Activated T-helper 2 cell treated with anti-CD3 and anti-CD28 coated beads, Interferon-gamma antibody, Interleukin-2, Interleukin-4, amounts not matched to agents 10 μg/mL and 5 μg/mL and 100 μg/mL, durations not matched to agents 14 hours and 24 hours and 36 hours (primary cell): ENCODE measurements at regions of chr19 and their contacts with region 1.

Region 1: DNA sequence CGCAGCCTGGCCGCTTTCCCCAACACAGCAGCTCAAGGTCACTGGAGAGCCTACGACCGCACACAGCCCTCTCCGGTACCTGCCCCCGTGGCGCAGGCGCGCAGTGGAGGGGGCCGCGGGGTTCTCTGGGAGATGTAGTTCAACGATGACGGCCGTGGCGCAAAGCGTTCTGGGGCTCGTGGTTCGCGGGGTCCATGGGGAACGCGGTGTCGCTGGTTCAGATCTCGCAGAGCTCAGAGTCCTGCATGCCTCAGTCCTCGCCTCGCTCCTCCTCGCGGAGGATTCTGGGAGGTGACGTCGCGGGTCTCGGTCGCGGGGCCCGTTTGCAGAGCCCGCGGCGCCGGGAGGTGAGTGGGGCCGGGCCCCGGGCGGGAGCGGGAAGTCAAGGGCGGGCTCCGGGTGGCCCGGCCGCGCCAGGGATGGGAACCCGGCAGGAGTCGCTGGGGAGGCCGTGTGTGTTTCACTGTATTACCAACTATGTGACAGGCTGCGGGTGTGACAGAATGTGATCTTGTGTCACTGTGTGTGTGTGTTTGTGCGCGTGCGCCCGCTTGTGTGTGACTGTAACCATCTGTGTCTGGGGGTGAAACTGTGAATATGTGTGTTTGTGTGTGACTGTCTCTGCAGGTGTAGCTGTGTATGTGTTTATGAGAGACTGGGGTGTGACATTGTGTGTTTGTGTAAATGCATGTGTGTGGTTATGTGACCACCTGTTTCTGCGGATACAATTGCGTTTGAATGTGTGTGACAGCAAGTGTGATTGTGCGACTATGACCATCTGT is at the start of gene ZNF527:
- DNase-seq: peak; percentile 96
- H3K4me3 Mint-ChIP-seq: peak within 1 kb of the TSS; percentile 90
- H3K27ac Mint-ChIP-seq: peak within 1 kb of the TSS; percentile 79
- H3K4me1 Mint-ChIP-seq: peaks cover 11% of the 10 kb centered on the region
- H3K27me3 Mint-ChIP-seq: no peaks in the 10 kb centered on the region
- total RNA-seq, gene ZNF527: 3.2 TPM in 2 replicates

Region 2: GRCh38 chr19:37172368-37173366 is 198.4 kb before region 1 on chr19 and contains the start of gene ZNF585A:
- intact Hi-C with region 1: loop called (anchors 1 kb)
- DNase-seq: peak; percentile 82
- H3K4me3 Mint-ChIP-seq: no peak within 1 kb of the TSS
- H3K27ac Mint-ChIP-seq: no peak within 1 kb of the TSS
- H3K4me1 Mint-ChIP-seq: no peaks in the 10 kb centered on the region
- H3K27me3 Mint-ChIP-seq: no peaks in the 10 kb centered on the region
- total RNA-seq, gene ZNF585A: 4.1 and 4.2 TPM in 2 replicates

Region 3: DNA sequence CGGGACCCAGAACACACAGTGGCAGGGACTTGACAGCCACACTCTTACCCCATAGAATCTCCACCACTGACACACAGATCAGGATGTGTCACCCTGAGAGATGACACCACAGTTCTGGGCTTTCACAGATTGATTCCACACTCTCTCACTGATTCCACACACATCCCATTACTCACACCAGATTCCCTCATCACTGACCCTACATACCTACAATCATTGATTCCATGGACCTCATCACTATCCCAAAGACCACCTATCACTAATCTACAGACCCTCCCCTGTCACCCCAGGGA is 57.8 kb before region 1 on chr19:
- intact Hi-C with region 1: loop called (anchors 1 kb)
- DNase-seq: no peak
- H3K4me3 Mint-ChIP-seq: peak overlapping the region; percentile 27
- H3K27ac Mint-ChIP-seq: no peak overlapping the region
- H3K4me1 Mint-ChIP-seq: peaks cover 13% of the 10 kb centered on the region
- H3K27me3 Mint-ChIP-seq: no peaks in the 10 kb centered on the region

Region 4: DNA sequence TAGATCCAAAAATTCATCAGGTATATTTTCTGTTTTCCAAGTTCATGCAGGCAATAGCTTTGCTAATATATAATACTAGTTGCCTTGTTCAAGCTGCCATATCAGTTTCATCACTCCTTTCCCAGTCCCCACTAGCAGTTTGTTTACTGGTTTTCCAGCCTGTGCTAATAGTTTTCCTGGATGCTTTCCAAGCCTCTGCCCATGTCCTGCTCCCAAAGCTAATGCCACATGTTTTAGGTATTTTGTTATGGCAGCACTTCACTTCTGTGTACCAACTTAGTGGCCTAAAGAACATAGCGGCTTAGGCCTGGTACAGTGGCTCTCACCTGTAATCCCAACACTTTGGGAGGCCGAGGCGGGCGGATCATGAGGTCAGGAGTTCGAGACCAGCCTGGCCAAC is 28.3 kb before region 1 on chr19:
- intact Hi-C with region 1: no loop called
- DNase-seq: no peak
- H3K4me3 Mint-ChIP-seq: no peak overlapping the region
- H3K27ac Mint-ChIP-seq: no peak overlapping the region
- H3K4me1 Mint-ChIP-seq: no peaks in the 10 kb centered on the region
- H3K27me3 Mint-ChIP-seq: no peaks in the 10 kb centered on the region

Region 5: GRCh38 chr19:37719111-37719926 is 348.2 kb after region 1 on chr19 and contains the start of gene ZNF607:
- intact Hi-C with region 1: loop called (anchors 1 kb)
- DNase-seq: peak; percentile 72
- H3K4me3 Mint-ChIP-seq: peak within 1 kb of the TSS; percentile 87
- H3K27ac Mint-ChIP-seq: peak within 1 kb of the TSS; percentile 71
- H3K4me1 Mint-ChIP-seq: peaks cover 6% of the 10 kb centered on the region
- H3K27me3 Mint-ChIP-seq: no peaks in the 10 kb centered on the region
- total RNA-seq, gene ZNF607: 2.7 and 3.0 TPM in 2 replicates